SK-N-SH (cell line): ENCODE measurements at regions of chr12 and their contacts with region 1.

Region 1: GRCh38 chr12:50111693-50112455 is at the start of gene COX14:
- DNase-seq: peak; percentile 96
- H3K4me3 ChIP-seq: peak within 1 kb of the TSS; percentile 67 to 99
- H3K27ac ChIP-seq: peak within 1 kb of the TSS; percentile 69 to 95
- H3K4me1 ChIP-seq: peaks cover 12 to 18% of the 10 kb centered on the region in 2 experiments; a peak in 2 of 4 replicates
- H3K27me3 ChIP-seq: no peaks in the 10 kb centered on the region
- CTCF ChIP-seq: peak; percentile 98
- EP300 ChIP-seq: no peak
- RAD21 ChIP-seq: peak; percentile 49
- polyA plus RNA-seq, gene COX14: 204 and 218 TPM in 2 replicates

Region 2: DNA sequence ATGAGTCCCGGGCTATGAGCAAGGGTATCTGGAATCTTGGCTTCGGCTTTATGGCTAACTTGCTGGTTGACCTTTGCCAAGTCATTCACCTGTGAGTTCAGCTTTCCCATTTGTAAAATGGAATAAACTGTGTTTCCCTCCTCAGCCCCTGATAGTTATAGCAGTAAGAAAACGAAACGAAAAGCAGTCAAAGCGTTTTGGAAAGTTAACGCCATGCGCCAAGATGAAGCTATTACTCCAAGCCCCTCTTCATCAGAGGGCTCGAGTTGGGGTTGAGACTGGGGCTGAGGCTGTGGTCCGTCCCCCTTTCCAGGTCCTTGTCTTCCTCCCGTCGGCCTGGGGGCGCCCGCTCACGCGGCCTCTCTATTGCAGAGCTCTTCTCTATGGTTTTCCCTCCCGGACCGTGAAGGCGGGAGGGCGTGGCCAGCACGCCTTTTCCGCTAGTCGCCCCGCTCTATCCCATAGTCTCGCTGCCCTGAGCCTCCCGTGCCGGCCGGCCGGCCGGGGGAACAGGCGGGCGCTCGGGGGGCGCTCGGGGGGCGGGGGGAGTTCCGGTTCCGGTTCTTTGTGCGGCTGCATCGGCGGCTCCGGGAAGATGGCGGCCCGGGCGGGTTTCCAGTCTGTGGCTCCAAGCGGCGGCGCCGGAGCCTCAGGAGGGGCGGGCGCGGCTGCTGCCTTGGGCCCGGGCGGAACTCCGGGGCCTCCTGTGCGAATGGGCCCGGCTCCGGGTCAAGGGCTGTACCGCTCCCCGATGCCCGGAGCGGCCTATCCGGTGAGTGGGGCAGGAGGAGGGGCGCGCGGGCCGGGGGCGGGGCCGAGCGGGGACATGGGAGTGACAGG is 26.9 kb before region 1 on chr12 and contains the start of gene SMARCD1:
- CTCF ChIA-PET with region 1: interaction called, 74 read pairs
- POLR2A ChIA-PET with region 1: interaction called, 23 read pairs
- DNase-seq: peak; percentile 98
- H3K4me3 ChIP-seq: peak within 1 kb of the TSS; percentile 77 to 79
- H3K27ac ChIP-seq: peak within 1 kb of the TSS; percentile 87 to 91
- H3K4me1 ChIP-seq: peaks cover 18 to 22% of the 10 kb centered on the region in 2 experiments
- H3K27me3 ChIP-seq: no peaks in the 10 kb centered on the region
- CTCF ChIP-seq: peak; percentile 67
- EP300 ChIP-seq: no peak
- RAD21 ChIP-seq: no peak
- polyA plus RNA-seq, gene SMARCD1: 58.5 and 77.2 TPM in 2 replicates

Region 3: DNA sequence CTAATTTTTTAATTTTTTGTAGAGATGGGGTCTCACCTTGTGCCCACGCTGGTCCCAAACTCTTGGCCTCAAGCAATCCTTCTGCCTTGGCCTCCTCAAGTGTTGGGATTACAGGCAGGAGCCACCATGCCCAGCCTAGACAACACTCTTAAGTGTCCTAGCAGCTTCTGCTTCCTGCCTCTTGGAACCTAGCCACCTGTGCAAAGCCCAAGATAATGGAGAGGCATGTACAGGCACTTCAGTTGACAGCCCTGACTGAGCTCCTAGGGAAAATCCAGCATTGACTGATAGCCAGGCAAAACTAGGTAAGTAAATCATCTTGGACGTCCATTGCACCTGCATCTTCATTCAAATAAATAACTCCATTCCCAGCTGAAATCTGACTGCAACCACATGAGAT is 15.7 kb after region 1 on chr12:
- CTCF ChIA-PET with region 1: interaction called, 84 read pairs
- POLR2A ChIA-PET with region 1: interaction called, 8 read pairs
- DNase-seq: no peak
- H3K4me3 ChIP-seq: no peak overlapping the region
- H3K27ac ChIP-seq: no peak overlapping the region
- H3K4me1 ChIP-seq: peaks cover 3 to 5% of the 10 kb centered on the region in 2 experiments; a peak in 2 of 4 replicates
- H3K27me3 ChIP-seq: no peaks in the 10 kb centered on the region
- CTCF ChIP-seq: no peak
- EP300 ChIP-seq: no peak
- RAD21 ChIP-seq: no peak

Region 4: DNA sequence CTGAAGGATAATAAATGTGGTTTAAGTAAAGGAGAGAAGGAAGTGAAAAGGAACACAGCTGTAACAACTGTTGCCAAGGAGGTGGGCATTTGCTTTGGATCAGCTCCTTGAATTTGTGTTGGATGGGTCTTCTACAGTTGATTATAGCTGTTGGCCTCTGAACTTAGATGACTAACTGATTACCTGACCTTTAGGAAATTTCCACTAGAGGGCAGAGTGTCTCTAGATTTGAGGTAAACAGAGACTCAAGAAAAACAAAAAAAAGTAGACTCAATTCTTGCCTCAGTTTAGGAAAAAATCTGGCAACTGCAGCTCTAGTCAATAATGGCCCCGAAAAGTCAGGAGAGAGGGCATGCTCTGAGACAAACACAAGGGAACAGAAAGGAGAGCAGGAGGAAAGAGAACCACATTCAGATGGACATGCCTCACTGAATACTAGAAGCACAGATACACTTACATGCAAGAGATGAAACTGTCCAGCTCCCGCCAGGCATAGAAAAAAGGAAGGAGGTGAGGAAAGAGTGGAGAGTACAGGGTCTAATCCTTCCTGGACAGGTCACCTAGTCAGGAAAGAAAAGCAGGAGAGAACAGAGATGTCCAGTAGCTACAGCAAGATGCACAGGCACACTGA is 20.7 kb after region 1 on chr12:
- CTCF ChIA-PET with region 1: interaction called, 84 read pairs
- POLR2A ChIA-PET with region 1: interaction called, 5 read pairs
- DNase-seq: peak; percentile 38
- H3K4me3 ChIP-seq: no peak overlapping the region; a peak in 1 of 4 replicates
- H3K27ac ChIP-seq: 0 out of 4 replicates have a peak overlapping the region, but pooled peaks of 1 of the 2 experiments have one; percentile 19
- H3K4me1 ChIP-seq: peaks cover 3 to 10% of the 10 kb centered on the region in 2 experiments; a peak in 3 of 4 replicates
- H3K27me3 ChIP-seq: no peaks in the 10 kb centered on the region
- CTCF ChIP-seq: peak; percentile 80
- EP300 ChIP-seq: no peak
- RAD21 ChIP-seq: peak; percentile 70

Region 5: GRCh38 chr12:50167041-50167828 is 55.4 kb after region 1 on chr12 and contains the start of gene CERS5:
- CTCF ChIA-PET with region 1: interaction called, 24 read pairs
- POLR2A ChIA-PET with region 1: interaction called, 27 read pairs
- DNase-seq: peak; percentile 99
- H3K4me3 ChIP-seq: peak within 1 kb of the TSS; percentile 66 to 97
- H3K27ac ChIP-seq: peak within 1 kb of the TSS; percentile 71 to 90
- H3K4me1 ChIP-seq: peaks cover 0 to 10% of the 10 kb centered on the region in 2 experiments; a peak in 1 of 4 replicates
- H3K27me3 ChIP-seq: no peaks in the 10 kb centered on the region
- CTCF ChIP-seq: no peak
- EP300 ChIP-seq: no peak
- RAD21 ChIP-seq: no peak
- polyA plus RNA-seq, gene CERS5: 56.9 and 68.3 TPM in 2 replicates